H1 (cell line): ENCODE measurements at regions of chr10 and their contacts with region 1.

Region 1: GRCh38 chr10:103752680-103753248 is 102.6 kb downstream of the SH3PXD2A start:
- DNase-seq: peak in 1 of 2 experiments; percentile 76
- H3K4me3 ChIP-seq: no peak overlapping the region
- H3K27ac ChIP-seq: no peak overlapping the region
- H3K4me1 ChIP-seq: peaks cover 4 to 11% (median 7%) of the 10 kb centered on the region in 4 experiments
- H3K27me3 ChIP-seq: no peaks in the 10 kb centered on the region
- CTCF ChIP-seq: peak in 2 of 3 experiments; percentile 46 to 73; a peak in 2 of 4 replicates
- EP300 ChIP-seq: no peak
- POLR2A ChIP-seq: no peak
- RAD21 ChIP-seq: peak; percentile 23 to 43; a peak in 2 of 4 replicates

Region 2: DNA sequence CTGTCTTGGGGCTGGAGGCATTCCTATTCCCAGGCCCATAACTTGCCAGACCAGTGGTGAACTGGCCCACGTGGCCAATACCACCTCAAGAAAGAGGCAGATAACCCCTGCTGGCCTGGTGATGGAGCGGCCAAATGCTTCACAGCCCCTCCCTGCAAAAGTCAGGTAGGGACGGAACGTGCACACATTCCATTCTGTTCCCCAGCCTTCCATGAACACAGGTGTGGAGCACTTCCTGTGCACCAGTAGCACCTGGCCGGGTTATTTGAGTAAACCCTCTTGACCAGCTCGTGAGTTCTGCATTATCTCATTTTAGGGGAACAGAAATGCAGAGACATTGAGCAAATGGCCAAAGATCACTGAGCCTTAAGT is 31.8 kb before region 1 on chr10:
- CTCF ChIA-PET with region 1: interaction called, 304 read pairs
- POLR2A ChIA-PET with region 1: no interaction called
- DNase-seq: no peak
- H3K4me3 ChIP-seq: no peak overlapping the region
- H3K27ac ChIP-seq: no peak overlapping the region
- H3K4me1 ChIP-seq: peaks cover 0 to 5% (median 1%) of the 10 kb centered on the region in 4 experiments; a peak in 3 of 7 replicates
- H3K27me3 ChIP-seq: no peaks in the 10 kb centered on the region
- CTCF ChIP-seq: no peak
- EP300 ChIP-seq: no peak
- POLR2A ChIP-seq: no peak
- RAD21 ChIP-seq: no peak

Region 3: DNA sequence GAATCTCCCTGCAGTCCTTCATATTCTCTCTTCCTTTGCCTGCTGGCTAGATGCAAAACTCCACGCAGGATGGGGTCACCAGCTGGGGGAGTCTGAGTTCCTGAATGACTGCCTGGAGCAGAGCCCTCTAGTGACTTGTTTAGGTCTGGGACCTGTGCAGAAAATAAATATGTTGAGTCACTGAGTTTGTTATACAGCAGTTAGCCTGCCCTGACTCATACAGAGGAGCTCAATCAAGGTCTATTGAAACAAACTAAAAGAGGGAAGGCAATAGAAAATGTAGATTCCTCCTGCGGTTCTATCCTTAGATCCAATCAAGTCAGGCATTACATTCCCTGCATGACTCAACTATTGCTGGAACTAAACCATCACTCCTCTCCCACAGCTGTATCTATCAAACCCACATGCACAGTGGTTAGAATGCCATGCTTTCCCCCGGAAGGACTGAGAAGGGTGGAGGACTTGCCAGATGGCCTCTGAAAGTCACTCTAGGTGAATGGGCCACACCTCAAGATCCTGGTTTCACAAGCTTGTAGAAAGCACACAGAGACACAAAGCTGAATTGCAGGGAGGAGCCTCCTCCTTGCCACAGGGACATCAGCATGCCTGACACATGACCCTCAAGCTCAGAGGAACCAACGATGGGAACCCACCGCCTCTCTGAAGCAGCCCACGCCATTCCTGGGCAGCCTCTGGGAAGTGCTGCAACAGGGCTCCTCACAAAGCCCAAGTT is 28.7 kb after region 1 on chr10:
- CTCF ChIA-PET with region 1: interaction called, 73 read pairs
- POLR2A ChIA-PET with region 1: interaction called, 3 read pairs
- DNase-seq: no peak
- H3K4me3 ChIP-seq: no peak overlapping the region
- H3K27ac ChIP-seq: no peak overlapping the region
- H3K4me1 ChIP-seq: peaks cover 0 to 2% (median 0%) of the 10 kb centered on the region in 4 experiments; a peak in 1 of 7 replicates
- H3K27me3 ChIP-seq: no peaks in the 10 kb centered on the region
- CTCF ChIP-seq: peak; percentile 22 to 78 (median 56)
- EP300 ChIP-seq: no peak
- POLR2A ChIP-seq: no peak
- RAD21 ChIP-seq: peak; percentile 34 to 51; a peak in 3 of 4 replicates

Region 4: GRCh38 chr10:103800789-103801540 is 48.2 kb after region 1 on chr10:
- CTCF ChIA-PET with region 1: interaction called, 12 read pairs
- POLR2A ChIA-PET with region 1: no interaction called
- DNase-seq: no peak
- H3K4me3 ChIP-seq: no peak overlapping the region
- H3K27ac ChIP-seq: no peak overlapping the region
- H3K4me1 ChIP-seq: peaks cover 0 to 14% (median 7%) of the 10 kb centered on the region in 4 experiments; a peak in 4 of 7 replicates
- H3K27me3 ChIP-seq: no peaks in the 10 kb centered on the region
- CTCF ChIP-seq: no peak
- EP300 ChIP-seq: no peak
- POLR2A ChIP-seq: no peak
- RAD21 ChIP-seq: no peak

Region 5: DNA sequence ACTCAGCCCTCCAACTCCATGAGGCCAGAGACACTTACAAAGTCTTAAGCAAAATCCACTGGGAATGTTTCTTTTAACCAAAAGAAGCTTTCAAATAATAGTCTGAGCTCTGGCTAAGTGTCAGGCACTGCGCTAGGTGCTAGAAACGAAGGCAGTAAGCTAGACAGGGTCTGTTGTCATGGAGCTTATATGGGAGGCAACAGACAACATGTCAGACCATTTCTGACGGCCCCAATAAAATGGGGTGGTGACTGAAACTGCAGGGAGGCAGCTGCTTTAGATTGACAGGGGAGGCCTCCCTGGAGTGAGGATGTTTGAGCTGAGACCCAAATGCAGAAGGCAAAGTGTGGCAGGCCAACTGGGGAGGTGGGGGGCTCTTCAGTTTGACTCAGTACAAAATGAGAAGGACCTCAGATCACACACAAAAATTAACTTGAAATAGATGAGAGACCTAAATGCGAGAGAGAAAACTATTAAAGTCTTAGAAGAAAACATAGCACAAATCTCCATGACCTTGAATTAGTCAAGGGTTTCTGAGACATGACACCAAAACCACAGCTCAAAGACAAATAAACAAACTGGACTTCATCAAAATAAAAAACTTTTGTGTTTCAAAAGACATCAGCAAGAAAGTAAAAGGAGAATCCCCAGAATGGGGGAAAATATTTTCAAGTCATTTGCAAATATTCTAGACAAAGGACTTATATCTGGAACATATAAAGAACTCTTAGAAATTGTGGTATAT is 62.0 kb after region 1 on chr10:
- CTCF ChIA-PET with region 1: interaction called, 11 read pairs
- POLR2A ChIA-PET with region 1: no interaction called
- DNase-seq: no peak
- H3K4me3 ChIP-seq: no peak overlapping the region
- H3K27ac ChIP-seq: no peak overlapping the region
- H3K4me1 ChIP-seq: 0 out of 7 replicates have a peak, but pooled peaks cover 0 to 1% (median 0%) of the 10 kb centered on the region in 4 experiments
- H3K27me3 ChIP-seq: no peaks in the 10 kb centered on the region
- CTCF ChIP-seq: no peak
- EP300 ChIP-seq: no peak
- POLR2A ChIP-seq: no peak
- RAD21 ChIP-seq: no peak

Region 6: DNA sequence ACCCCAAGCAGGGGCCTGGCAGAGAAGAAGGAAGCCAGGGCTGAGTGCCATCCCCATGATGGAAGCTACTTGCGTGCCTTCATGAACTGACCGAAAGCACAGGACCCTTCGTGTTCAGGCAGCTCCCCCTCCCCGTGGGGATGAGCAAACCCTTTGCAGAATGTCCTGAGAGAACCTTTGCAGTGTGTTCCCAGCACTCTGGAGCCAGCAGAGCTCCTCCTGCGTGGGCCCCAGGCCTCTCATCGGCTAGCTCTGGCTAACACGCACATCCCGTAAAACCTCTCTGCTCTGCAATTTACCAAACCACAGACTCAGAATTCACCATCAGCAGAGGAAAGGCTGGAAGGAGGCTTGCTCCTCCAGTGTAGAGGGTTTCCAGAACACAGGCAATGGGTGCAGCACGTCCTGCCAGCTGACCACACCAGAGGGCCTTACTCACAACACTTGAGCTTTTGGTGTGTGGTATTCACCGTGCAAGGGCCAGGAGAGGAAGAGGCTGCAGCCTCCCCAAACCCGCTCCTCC is 99.5 kb after region 1 on chr10:
- CTCF ChIA-PET with region 1: interaction called, 29 read pairs
- POLR2A ChIA-PET with region 1: interaction called, 4 read pairs
- DNase-seq: no peak
- H3K4me3 ChIP-seq: no peak overlapping the region
- H3K27ac ChIP-seq: no peak overlapping the region
- H3K4me1 ChIP-seq: peaks cover 5 to 12% (median 7%) of the 10 kb centered on the region in 4 experiments
- H3K27me3 ChIP-seq: peaks cover 4 to 38% (median 31%) of the 10 kb centered on the region in 4 experiments; a peak in 6 of 7 replicates
- CTCF ChIP-seq: no peak
- EP300 ChIP-seq: no peak
- POLR2A ChIP-seq: no peak
- RAD21 ChIP-seq: no peak

Region 7: DNA sequence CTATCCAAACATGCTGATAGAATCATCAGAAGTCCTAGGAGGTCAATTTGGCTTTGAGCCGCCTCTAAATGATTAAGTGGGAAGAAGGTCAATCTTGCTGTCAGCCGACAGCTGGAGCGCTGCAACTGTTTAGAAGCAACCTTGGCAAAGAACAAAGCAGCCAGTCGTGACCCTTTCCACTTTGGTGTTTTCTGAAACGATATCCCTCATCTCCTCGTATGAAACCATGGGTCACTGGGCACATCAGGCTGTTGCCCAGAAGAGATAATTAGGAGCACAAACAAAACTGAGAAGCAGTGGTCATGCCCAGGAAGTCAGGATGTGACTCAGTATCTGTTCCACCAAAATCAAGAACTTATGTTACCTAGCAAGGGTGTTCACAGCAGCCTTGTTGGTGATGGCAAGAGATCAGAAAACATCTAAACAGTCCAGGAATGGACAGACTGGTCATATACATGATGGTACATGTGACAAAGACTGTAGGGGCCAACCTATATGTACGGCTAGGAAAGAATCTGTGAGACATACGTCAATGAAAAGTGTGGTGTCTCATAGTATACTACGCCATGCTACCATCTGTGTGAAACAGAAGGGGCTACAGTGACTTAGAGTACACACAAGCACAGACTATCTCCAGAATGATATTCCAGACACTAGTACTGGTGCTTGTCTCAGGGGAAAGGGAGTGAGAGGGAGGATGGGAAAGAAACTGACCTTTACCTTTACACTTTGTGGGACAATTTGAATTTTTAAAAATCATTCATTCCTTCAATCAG is 142.8 kb after region 1 on chr10:
- CTCF ChIA-PET with region 1: no interaction called
- POLR2A ChIA-PET with region 1: no interaction called
- DNase-seq: no peak
- H3K4me3 ChIP-seq: no peak overlapping the region
- H3K27ac ChIP-seq: no peak overlapping the region
- H3K4me1 ChIP-seq: peaks cover 0 to 2% (median 0%) of the 10 kb centered on the region in 4 experiments; a peak in 2 of 7 replicates
- H3K27me3 ChIP-seq: no peaks in the 10 kb centered on the region
- CTCF ChIP-seq: no peak
- EP300 ChIP-seq: no peak
- POLR2A ChIP-seq: no peak
- RAD21 ChIP-seq: no peak